ENCODE measurements at regions of chr18 and their contacts with region 1.

Region 1: GRCh38 chr18:46445914-46446313 is 211.1 kb downstream of the LOXHD1 start:
- DNase-seq: no peak
- ATAC-seq: no peak

Region 2: DNA sequence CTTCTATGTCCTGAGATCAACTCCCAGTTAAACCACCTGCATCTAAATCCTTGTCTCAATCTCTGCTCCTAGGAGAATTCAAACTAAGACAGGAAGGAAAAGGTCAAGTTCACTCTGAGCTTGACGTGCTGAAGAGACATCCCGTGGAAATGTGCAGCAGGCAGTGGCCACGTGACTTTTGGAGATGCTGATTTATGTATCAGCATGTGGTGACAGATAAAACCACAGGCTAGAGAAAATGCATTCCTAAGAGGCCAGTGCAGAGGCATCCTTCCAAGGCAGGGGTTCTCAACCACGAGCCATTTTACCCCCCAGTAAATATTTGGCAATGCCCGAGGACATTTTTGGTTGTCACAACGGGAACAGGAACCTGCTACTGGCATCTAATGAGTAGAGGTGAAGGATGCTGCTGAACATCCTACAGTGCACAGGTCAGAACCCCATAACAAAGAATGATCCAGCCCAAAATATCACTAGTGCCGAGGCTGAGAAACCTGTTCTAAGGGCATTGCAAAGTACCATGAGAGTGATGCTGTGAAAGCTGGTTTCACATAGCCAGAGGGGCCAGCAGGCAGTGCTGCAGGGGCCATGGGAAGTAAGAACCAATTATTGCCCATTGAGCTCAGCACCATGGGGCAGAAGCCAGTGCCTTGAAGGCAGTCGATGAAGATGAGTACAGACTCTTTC is 167.3 kb before region 1 on chr18:
- intact Hi-C with region 1: no loop called
- DNase-seq: no peak
- ATAC-seq: peak; percentile 42

Region 3: DNA sequence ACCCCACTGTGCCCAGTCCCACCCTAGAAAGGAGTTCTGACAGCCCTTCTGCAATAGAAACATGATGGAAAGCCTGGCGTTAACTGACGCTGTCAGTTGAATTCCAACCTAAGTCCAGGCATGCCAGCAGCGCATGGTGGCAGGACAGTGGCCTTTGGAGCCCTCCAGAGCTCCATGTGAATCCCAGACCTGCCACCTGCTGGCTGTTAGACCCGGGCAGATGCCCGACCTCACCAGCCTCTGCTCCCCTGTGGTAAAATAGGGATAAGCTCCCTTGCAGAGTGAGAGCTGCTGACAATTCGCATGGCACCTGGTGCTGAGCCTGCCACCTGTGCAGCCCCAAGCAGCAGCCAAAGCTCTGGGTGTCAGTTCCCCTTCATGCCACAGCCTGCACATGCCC is 72.5 kb after region 1 on chr18:
- intact Hi-C with region 1: loop called (anchors 10 kb)
- DNase-seq: peak; percentile 71
- ATAC-seq: peak; percentile 95

Region 4: DNA sequence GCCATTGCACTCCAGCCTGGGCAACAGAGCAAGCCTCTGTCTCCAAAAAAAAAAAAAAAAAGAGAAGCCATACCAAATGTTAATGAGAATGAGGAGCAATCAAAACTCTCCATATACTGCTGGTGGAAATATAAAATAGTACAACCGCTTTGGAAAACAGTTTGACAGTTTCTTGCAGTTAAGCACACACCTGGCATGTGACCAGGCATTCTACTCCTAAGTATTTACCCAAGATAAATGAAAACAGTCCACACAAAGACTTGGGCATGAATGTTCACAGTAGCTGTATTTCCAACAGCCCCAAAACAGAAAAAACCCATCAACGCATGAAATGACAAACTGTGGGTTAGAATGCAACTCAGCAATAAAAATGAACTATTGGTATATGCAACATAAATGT is 386.9 kb after region 1 on chr18:
- intact Hi-C with region 1: no loop called
- DNase-seq: no peak
- ATAC-seq: no peak

Measured in Right ventricle myocardium superior (tissue), 1 donor.